ENCODE measurements at regions of chr2 and their contacts with region 1.

Region 1: DNA sequence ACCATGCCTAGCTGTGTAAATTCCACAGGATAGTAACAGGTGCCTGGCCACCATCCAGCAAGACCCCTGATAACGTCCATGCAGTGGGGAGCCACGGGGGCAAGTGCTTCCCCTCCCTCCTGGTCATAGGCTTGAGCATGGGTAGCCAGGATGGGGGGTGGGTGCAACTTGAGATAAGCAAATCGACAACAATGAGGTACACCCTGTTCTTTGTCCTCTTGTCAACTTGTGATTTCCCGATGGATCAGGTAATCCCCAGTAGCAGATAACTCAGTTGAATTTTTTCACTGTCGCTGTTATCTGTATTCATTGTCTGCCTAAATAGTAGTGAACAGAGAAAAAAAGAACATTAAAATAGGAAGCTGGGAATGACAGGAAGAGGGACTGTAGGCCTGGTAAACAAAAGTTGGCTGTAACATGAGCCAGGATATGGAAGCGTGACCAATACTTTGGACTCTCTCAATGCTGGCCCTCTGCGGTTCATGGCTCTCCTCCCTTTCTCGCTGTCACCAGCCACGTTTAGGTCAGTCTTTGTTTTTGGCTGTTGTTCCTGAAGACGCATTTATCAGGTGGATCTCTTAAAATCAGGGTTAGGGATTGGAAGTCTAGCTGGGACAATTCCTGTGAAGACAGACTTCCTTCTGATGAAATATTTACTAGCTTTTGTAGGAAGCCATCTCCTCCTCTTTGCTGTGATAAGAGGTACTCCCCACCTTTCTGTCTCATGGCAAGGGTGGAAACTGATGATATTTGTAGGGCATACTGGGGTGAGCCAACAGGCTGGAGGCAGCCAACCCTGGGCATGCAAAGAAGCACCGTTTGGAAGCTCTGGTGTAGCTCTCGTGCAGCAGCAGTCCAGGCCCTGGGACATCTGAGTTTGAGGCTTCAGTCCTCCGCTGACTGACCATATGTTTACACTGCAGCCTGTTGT is 42.4 kb downstream of the TCF7L1 start:
- DNase-seq: peak; percentile 89
- ATAC-seq: peak; percentile 99
- H3K4me3 ChIP-seq: peak overlapping the region; percentile 21; the same call in 1 of the 2 replicates
- H3K27ac ChIP-seq: peak overlapping the region; percentile 23
- H3K4me1 ChIP-seq: peaks cover 27% of the 10 kb centered on the region
- H3K27me3 ChIP-seq: no peaks in the 10 kb centered on the region
- CTCF ChIP-seq: no peak

Region 2: DNA sequence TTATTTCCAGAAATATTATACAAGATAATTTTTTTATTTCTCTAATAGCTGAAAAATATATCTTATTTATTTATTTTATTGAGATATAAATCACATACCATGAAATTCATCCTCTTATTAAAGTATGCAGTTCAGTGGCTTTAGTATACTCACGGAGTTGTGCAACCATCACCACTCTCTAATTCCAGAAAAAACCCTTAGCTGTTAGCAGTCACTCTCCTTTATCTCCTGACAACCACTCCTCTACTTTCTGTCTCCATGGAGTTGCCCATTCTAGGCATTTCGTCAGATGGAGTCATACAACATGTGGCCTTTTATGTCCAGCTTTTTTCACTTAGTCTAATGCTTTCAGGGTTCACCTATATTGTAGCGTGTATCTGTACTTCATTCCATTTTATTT is 24.1 kb after region 1 on chr2:
- CTCF ChIA-PET with region 1: no interaction called
- POLR2A ChIA-PET with region 1: no interaction called
- intact Hi-C with region 1: no loop called
- DNase-seq: no peak
- ATAC-seq: no peak
- H3K4me3 ChIP-seq: no peak overlapping the region
- H3K27ac ChIP-seq: no peak overlapping the region
- H3K4me1 ChIP-seq: no peaks in the 10 kb centered on the region
- H3K27me3 ChIP-seq: no peaks in the 10 kb centered on the region
- CTCF ChIP-seq: no peak

Region 3: DNA sequence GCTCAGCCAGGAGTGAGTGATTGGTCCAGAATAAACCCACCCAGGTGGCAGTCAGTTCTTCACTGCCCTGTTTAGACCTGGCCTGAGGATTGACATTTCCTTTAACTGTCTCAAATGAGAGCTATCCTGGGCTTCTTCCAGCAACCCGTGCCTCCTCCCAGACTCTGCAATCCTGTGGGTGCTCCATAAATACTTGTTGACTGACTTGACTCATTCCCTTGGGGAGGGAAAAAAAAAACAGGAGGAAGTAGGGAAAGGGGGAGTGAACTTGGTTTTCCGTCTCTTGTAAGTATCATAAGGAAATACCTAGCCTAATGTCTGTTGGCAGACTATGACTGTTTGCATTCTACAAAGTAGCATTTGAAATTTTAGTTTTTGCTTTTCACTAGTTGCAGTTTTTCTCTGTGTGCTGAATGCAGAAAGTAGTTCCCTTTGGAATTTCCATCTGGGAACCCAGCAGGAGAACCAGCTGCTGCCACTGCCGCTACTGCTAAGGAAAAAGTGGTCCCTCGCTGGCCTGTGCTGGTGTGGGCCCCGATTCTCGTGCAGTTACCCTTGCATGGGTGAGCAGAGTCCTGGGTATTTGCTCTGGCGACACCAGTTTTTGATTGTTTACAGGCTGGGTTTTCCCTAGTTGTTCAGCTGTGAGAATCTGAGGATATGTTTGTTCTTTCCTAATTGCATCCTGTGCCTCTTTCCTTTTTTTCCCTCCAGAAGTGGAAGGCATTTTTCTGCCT is 73.3 kb after region 1 on chr2:
- CTCF ChIA-PET with region 1: no interaction called
- POLR2A ChIA-PET with region 1: no interaction called
- intact Hi-C with region 1: loop called (anchors 5 kb)
- DNase-seq: peak; percentile 92
- ATAC-seq: peak; percentile 95
- H3K4me3 ChIP-seq: peak overlapping the region; percentile 40; the same call in 1 of the 2 replicates
- H3K27ac ChIP-seq: peak overlapping the region; percentile 76
- H3K4me1 ChIP-seq: peaks cover 20% of the 10 kb centered on the region
- H3K27me3 ChIP-seq: no peaks in the 10 kb centered on the region
- CTCF ChIP-seq: no peak